Tibial artery (tissue), 4 donors: ENCODE measurements at regions of chr7 and their contacts with region 1.

Region 1: DNA sequence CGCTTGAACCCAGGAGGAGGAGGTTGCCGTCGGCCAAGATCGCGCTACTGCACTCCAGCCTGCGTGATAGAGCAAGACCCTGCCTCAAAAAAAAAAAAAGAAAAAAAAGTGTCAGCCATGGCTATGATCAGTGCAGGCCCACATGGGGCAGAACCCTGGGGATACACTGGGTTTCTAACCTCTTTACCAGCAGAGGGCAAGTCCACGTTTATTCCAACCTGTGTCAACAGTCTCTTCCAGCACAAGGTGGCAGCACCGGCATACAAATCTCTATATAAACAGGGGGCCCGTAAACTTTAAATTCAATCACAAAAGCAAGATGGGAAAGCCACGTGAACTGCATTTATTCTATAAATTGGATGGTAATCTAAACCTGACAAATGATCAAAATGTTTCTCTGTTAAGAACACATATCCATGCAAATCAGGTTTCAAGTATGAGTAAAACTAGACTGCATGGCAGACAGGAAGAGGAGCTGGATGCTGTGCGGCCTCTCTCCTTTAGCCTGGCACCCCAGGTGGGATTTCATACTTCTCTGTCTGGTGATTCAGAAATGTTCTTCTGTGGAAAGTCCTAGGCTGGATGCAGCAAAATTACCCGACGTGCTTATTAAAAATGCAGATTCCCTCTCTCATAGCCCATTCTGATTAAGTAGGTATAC is 60.0 kb upstream of the STEAP1B start:
- DNase-seq: peak; percentile 77 to 78
- H3K4me3 ChIP-seq: no peak overlapping the region
- H3K27ac ChIP-seq: no peak overlapping the region
- H3K4me1 ChIP-seq: peaks cover 0 to 31% (median 25%) of the 10 kb centered on the region in 4 donors
- H3K27me3 ChIP-seq: no peaks in the 10 kb centered on the region
- CTCF ChIP-seq: peak; percentile 79 to 91

Region 2: GRCh38 chr7:22726345-22727185 is 166.6 kb after region 1 on chr7:
- intact Hi-C with region 1: loop called (anchors 5 kb)
- DNase-seq: peak in 1 of 2 donors; percentile 41
- H3K4me3 ChIP-seq: peak overlapping the region; percentile 35 to 45
- H3K27ac ChIP-seq: peak overlapping the region; percentile 35 to 53
- H3K4me1 ChIP-seq: peaks cover 3 to 40% (median 33%) of the 10 kb centered on the region in 4 donors
- H3K27me3 ChIP-seq: no peaks in the 10 kb centered on the region
- CTCF ChIP-seq: peak; percentile 47 to 62

Region 3: DNA sequence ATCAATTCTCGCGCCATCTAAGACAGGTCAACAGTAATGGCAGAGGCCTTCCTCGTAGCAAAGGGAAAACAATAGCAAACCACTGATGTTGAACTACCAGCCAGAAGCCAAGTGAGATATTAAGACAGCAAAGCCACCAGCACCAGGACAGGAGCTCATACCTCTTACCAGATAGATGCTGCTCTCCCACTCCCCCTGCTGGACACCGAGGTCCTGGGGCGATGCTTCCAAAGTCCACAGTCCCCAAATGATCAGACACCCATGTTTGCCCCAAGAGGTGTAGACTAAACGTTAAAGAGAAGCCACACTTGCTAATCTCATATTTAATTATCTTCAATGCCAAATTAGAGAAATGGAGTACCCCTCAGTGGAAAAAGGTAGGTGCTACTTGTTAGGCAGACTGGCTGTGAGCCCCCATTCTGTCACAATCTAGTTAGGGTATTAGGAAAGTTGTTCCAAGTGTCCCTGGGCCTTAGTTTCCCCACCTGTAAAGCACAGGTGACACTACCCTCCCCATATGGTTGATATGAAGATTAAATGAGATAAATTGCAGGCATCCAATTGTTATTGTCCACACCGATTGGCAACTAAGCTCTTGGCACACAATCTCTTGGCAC is 222.8 kb after region 1 on chr7:
- intact Hi-C with region 1: loop called (anchors 2 kb)
- DNase-seq: peak; percentile 61 to 72
- H3K4me3 ChIP-seq: no peak overlapping the region
- H3K27ac ChIP-seq: no peak overlapping the region
- H3K4me1 ChIP-seq: no peaks in the 10 kb centered on the region
- H3K27me3 ChIP-seq: no peaks in the 10 kb centered on the region
- CTCF ChIP-seq: peak; percentile 61 to 65

Region 4: DNA sequence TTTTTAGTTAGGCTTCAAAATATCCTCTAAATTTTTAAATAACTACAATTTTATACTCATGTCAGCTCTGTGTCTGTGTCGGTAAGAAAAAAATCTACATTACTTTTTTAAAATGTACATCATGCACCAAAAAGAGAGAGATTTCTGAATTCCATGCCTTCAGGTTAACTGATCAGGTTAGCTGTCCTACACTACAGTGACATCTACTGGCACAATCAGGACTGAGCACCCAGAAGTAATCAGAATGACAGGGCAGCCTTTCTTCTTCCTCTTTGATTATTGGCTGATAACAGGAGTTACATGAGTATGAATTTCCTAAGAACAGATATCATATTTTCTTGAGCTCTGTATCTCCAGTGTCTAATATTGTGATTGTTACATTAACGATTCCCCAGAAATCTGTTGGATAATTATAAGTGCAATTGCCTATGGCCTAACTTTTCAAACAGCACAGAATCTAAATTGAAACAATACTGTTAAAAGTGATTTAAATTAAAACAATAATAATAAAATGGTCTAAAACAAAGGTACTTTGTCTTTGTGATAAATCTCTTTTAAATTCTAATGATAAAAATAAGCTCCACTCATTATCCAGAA is 495.7 kb after region 1 on chr7:
- intact Hi-C with region 1: loop called (anchors 5 kb)
- DNase-seq: peak in 1 of 2 donors; percentile 50
- H3K4me3 ChIP-seq: no peak overlapping the region
- H3K27ac ChIP-seq: no peak overlapping the region
- H3K4me1 ChIP-seq: no peaks in the 10 kb centered on the region
- H3K27me3 ChIP-seq: no peaks in the 10 kb centered on the region
- CTCF ChIP-seq: peak; percentile 89 to 92

Region 5: DNA sequence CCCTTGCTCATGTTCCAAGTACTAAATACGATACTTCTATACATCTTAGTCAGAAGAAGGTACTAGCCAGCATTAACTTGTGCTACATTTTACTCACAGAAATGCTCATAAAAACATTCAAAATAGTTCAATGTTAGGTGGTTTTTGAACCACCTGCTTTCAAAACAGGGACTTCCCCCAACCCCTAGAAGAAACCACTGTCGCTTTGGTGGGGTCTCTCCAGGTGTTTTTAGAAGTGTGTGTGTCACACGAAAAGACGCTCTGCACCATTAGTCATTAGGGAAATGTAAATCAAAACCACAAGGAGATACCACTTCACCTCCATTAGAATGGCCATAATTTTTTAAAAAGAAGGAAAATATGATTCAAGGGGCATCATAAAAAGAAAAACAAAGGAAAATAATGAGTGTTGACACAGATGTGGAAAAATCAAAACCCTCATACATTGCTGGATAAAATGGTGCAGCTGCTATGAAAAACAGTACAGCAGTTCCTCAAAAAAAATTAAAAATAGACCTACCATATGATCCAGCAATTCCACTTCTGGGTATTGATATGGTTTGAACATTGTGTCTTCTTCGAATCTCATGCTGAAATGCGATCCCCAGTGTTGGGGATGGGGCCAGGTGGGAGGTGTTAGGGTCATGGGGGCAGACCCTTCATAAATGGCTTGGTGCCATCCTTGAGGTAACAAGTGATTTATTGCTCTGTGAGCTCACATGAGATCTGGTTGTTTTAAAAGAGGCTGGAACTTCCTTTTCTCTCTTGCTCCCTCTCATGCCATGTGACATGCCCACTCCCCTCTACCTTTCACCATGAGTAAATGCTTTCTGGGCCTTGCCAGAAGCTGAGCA is 813.4 kb after region 1 on chr7:
- intact Hi-C with region 1: no loop called
- DNase-seq: no peak
- H3K4me3 ChIP-seq: no peak overlapping the region
- H3K27ac ChIP-seq: no peak overlapping the region
- H3K4me1 ChIP-seq: no peaks in the 10 kb centered on the region
- H3K27me3 ChIP-seq: no peaks in the 10 kb centered on the region
- CTCF ChIP-seq: no peak